ENCODE measurements at regions of chr5 and their contacts with region 1.

Region 1: GRCh38 chr5:73201547-73202513 is 28.8 kb downstream of the TMEM174 start:
- DNase-seq: no peak
- ATAC-seq: peak; percentile 99
- H3K4me3 ChIP-seq: no peak overlapping the region
- H3K27ac ChIP-seq: no peak overlapping the region
- H3K4me1 ChIP-seq: no peaks in the 10 kb centered on the region
- H3K27me3 ChIP-seq: peaks cover 0 to 1% of the 10 kb centered on the region in 2 experiments; a peak in 2 of 4 replicates
- CTCF ChIP-seq: peak; percentile 69 to 90 (median 80)
- EP300 ChIP-seq: no peak
- POLR2A ChIP-seq: no peak
- RAD21 ChIP-seq: peak; percentile 61

Region 2: DNA sequence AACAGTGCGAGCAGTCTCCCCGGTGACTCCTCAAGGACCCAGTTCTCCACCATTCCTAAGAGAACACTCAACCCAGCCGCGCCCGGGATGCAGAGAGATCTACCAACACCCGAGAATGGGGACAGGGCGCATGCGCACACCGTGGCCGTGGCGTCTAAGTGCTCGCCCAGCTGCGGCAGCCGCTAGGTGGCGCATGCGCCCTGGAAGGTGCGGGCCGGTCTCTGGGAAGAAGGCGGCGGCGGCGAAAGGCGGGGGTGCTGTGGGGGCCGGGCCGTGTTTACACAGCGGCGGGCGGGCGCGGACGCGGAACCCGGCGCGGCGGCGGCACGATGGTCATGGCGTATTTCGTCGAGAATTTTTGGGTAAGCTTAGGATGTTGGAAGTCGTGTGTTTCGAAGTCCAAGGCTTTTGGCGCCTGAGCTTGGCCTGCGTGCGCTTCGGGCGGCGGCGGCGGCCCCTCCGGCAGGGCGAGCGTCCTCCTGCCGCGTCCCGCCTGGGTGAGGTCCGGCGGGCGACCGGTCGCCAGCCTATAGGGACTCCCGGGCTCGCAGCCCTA is 246.0 kb before region 1 on chr5 and contains the start of gene FCHO2:
- CTCF ChIA-PET with region 1: interaction called, 8 read pairs
- POLR2A ChIA-PET with region 1: no interaction called
- RAD21 ChIA-PET with region 1: interaction called, 3 read pairs
- SMC1A ChIA-PET with region 1: no interaction called
- in situ Hi-C with region 1: no loop called
- intact Hi-C with region 1: loop called (anchors 1 kb)
- DNase-seq: peak; percentile 57
- ATAC-seq: peak; percentile 97
- H3K4me3 ChIP-seq: peak within 1 kb of the TSS; percentile 73
- H3K27ac ChIP-seq: no peak within 1 kb of the TSS
- H3K4me1 ChIP-seq: no peaks in the 10 kb centered on the region; the same call in 1 of the 2 replicates
- H3K27me3 ChIP-seq: peaks cover 0 to 2% of the 10 kb centered on the region in 2 experiments; a peak in 2 of 4 replicates
- CTCF ChIP-seq: peak; percentile 73 to 90 (median 83)
- EP300 ChIP-seq: no peak
- POLR2A ChIP-seq: peak; percentile 43; the same call in 1 of the 2 replicates
- RAD21 ChIP-seq: peak; percentile 57
- polyA plus RNA-seq, gene FCHO2: 0.05 to 0.19 TPM

Region 3: GRCh38 chr5:73088026-73088425 is 113.8 kb before region 1 on chr5:
- CTCF ChIA-PET with region 1: interaction called, 25 read pairs
- POLR2A ChIA-PET with region 1: no interaction called
- RAD21 ChIA-PET with region 1: interaction called, 5 read pairs
- SMC1A ChIA-PET with region 1: interaction called, 11 read pairs
- in situ Hi-C with region 1: no loop called
- intact Hi-C with region 1: loop called (anchors 1 kb)
- DNase-seq: no peak
- ATAC-seq: no peak
- H3K4me3 ChIP-seq: no peak overlapping the region
- H3K27ac ChIP-seq: no peak overlapping the region
- H3K4me1 ChIP-seq: no peaks in the 10 kb centered on the region
- H3K27me3 ChIP-seq: no peaks in the 10 kb centered on the region
- CTCF ChIP-seq: no peak
- EP300 ChIP-seq: no peak
- POLR2A ChIP-seq: no peak
- RAD21 ChIP-seq: no peak

Measured in GM12878 (cell line).